T-cell (primary cell): ENCODE measurements at regions of chr14 and their contacts with region 1.

Region 1: GRCh38 chr14:50714450-50715073 is 46.5 kb upstream of the SAV1 start:
- DNase-seq: peak in 1 of 35 experiments; percentile 41
- ATAC-seq: peak in 2 of 4 experiments; percentile 44 to 57
- H3K4me3 ChIP-seq: no peak overlapping the region
- H3K4me3 Mint-ChIP-seq: no peak overlapping the region
- H3K27ac ChIP-seq: no peak overlapping the region
- H3K27ac Mint-ChIP-seq: no peak overlapping the region
- H3K4me1 ChIP-seq: no peaks in the 10 kb centered on the region
- H3K4me1 Mint-ChIP-seq: no peaks in the 10 kb centered on the region
- H3K27me3 ChIP-seq: no peaks in the 10 kb centered on the region
- H3K27me3 Mint-ChIP-seq: peaks cover 3 to 10% of the 10 kb centered on the region in 2 donors

Region 2: DNA sequence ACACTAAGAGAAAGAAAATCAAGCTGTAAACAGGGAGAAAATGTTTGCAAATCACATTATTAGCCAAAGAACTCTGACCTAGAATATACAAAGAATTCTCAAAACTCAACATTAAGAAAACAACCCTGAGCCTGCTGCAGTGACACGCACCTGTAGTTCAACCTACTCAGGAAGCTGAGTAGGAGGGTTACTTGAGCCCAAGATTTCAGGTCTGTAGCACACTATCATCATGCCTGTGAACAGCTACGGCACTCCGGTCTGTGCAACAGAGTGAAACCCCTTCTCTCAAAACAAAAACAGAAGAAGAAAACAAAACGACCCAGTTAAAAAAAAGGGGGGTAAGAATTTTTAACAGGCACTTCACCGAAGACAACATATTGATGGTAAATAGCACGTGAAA is 67.3 kb before region 1 on chr14:
- CTCF ChIA-PET with region 1: no interaction called
- POLR2A ChIA-PET with region 1: no interaction called
- DNase-seq: no peak
- ATAC-seq: no peak
- H3K4me3 ChIP-seq: no peak overlapping the region
- H3K4me3 Mint-ChIP-seq: no peak overlapping the region
- H3K27ac ChIP-seq: no peak overlapping the region
- H3K27ac Mint-ChIP-seq: no peak overlapping the region
- H3K4me1 ChIP-seq: no peaks in the 10 kb centered on the region
- H3K4me1 Mint-ChIP-seq: peaks cover 0 to 15% (median 0%) of the 10 kb centered on the region in 3 donors
- H3K27me3 ChIP-seq: no peaks in the 10 kb centered on the region
- H3K27me3 Mint-ChIP-seq: no peaks in the 10 kb centered on the region

Region 3: DNA sequence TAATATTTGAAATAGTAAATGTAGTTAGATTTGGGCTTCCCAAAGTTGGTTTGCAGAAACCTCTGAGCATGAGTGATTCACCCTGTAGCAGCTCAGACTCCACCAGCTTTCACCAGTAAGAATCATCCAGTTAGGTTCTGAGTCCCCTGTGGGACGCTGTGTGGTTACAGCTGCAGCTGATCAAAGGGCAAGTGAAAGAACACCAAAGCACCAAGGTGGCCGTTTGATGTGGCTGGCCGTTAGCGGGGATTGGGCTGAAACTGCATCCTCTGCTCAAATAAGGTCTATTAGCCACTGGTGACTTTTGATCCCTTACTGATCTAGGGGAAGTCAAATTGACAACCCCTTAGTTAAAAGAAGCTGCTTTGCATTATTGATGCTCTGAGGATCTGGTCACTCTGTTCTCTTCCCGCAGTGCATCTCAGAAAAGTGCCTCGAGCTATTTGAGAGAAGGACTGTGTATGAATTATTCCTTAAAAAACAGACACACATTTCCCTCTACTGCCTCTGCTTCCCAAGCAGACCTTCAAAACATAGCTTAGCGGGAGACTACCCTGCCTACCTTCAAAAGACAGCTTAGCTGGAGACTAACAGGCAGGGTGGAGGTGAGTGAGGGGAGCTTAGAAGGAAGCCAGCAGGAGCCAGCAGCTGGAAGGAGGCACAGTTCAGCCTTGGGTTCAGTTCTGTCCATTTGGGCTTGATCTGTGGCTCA is 161.0 kb after region 1 on chr14:
- CTCF ChIA-PET with region 1: interaction called in 1 of 2 experiments, 10 read pairs
- POLR2A ChIA-PET with region 1: no interaction called
- DNase-seq: peak in 32 of 35 experiments; percentile 19 to 67 (median 33)
- ATAC-seq: peak; percentile 86 to 97 (median 90)
- H3K4me3 ChIP-seq: no peak overlapping the region
- H3K4me3 Mint-ChIP-seq: peak overlapping the region in 2 of 3 donors; percentile 52 to 63
- H3K27ac ChIP-seq: no peak overlapping the region
- H3K27ac Mint-ChIP-seq: no peak overlapping the region
- H3K4me1 ChIP-seq: peaks cover 11 to 23% of the 10 kb centered on the region in 2 experiments
- H3K4me1 Mint-ChIP-seq: peaks cover 34 to 45% (median 43%) of the 10 kb centered on the region in 3 donors
- H3K27me3 ChIP-seq: peaks cover 4 to 23% of the 10 kb centered on the region in 2 experiments
- H3K27me3 Mint-ChIP-seq: peaks cover 36 to 39% of the 10 kb centered on the region in 2 donors